ENCODE measurements at regions of chr10 and their contacts with region 1.

Region 1: GRCh38 chr10:5623081-5623748 is 43.2 kb downstream of the ASB13 start:
- DNase-seq: peak; percentile 74
- ATAC-seq: peak; percentile 86
- H3K4me3 ChIP-seq: peak overlapping the region in 2 of 3 experiments; percentile 38 to 68; a peak in 2 of 6 replicates
- H3K27ac ChIP-seq: no peak overlapping the region
- H3K4me1 ChIP-seq: peaks cover 54% of the 10 kb centered on the region
- H3K27me3 ChIP-seq: no peaks in the 10 kb centered on the region; a peak in 1 of 5 replicates
- CTCF ChIP-seq: peak; percentile 100
- EP300 ChIP-seq: no peak; a peak in 1 of 4 replicates
- POLR2A ChIP-seq: no peak
- RAD21 ChIP-seq: peak; percentile 99

Region 2: DNA sequence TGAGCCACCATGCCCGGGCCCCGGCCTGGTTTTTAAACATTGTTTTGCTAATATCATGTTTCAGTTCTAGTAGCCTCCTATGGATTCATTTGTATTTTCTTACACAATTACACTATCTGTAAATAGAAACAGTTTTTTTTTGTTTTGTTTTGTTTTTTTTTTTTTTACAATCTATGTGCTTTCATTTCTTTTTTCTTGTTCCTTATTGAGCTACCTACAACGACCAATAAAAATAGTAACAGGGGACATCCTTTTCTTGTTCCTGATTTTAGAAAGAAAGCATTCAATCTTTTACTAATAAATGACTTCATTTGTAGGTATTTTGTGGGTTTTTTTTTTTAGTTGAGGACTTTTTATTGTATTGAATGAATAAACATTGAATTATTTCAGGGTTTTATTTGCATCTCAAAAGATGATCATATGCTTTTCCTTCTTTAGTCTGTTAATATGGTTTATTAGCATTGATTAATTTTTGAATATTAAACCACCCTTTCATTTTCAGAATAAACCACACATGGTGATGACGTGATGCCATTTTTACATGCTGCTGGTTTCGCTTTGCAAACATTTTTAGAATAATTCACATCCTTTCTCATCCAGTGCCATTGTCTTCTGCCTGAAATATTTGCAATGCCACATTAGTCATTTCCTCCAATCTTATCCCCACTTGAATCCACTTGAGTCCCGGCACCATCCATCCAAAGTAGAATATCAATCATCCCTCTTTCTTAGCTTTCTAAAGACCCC is 815.3 kb before region 1 on chr10:
- CTCF ChIA-PET with region 1: no interaction called
- POLR2A ChIA-PET with region 1: no interaction called
- in situ Hi-C with region 1: loop called (anchors 25 kb)
- intact Hi-C with region 1: no loop called
- DNase-seq: peak; percentile 6
- ATAC-seq: no peak
- H3K4me3 ChIP-seq: no peak overlapping the region
- H3K27ac ChIP-seq: no peak overlapping the region
- H3K4me1 ChIP-seq: peaks cover 25% of the 10 kb centered on the region
- H3K27me3 ChIP-seq: peaks cover 0 to 6% of the 10 kb centered on the region in 2 experiments; a peak in 1 of 5 replicates
- CTCF ChIP-seq: no peak
- EP300 ChIP-seq: no peak
- POLR2A ChIP-seq: no peak
- RAD21 ChIP-seq: no peak

Region 3: DNA sequence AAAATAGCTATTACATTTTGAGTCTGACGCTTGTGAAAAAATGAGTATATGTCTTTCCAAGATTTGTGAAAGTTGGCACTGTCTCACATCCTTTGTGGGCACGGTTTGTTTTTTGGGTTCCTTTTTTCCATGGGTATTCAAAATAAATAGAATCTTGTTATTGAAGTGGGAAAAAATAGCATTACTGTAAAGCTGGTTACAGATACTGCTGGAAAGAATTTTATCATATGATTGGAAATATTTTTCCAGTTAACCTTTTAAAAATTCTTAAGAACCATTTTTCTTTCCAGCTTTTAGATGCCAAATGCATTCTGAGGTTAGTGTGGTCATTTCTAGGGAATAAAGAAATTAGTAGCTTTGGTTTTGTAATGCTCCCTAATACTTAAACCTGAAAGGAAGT is 199.4 kb before region 1 on chr10:
- CTCF ChIA-PET with region 1: no interaction called
- POLR2A ChIA-PET with region 1: no interaction called
- in situ Hi-C with region 1: no loop called
- intact Hi-C with region 1: no loop called
- DNase-seq: no peak
- ATAC-seq: no peak
- H3K4me3 ChIP-seq: no peak overlapping the region
- H3K27ac ChIP-seq: no peak overlapping the region
- H3K4me1 ChIP-seq: no peaks in the 10 kb centered on the region
- H3K27me3 ChIP-seq: no peaks in the 10 kb centered on the region
- CTCF ChIP-seq: no peak
- EP300 ChIP-seq: no peak
- POLR2A ChIP-seq: no peak
- RAD21 ChIP-seq: no peak

Region 4: GRCh38 chr10:5583525-5584175 is 39.6 kb before region 1 on chr10:
- CTCF ChIA-PET with region 1: no interaction called
- POLR2A ChIA-PET with region 1: no interaction called
- in situ Hi-C with region 1: no loop called
- intact Hi-C with region 1: loop called (anchors 5 kb)
- DNase-seq: no peak
- ATAC-seq: peak; percentile 11; the same call in 1 of the 3 replicates
- H3K4me3 ChIP-seq: peak overlapping the region in 1 of 3 experiments; percentile 20; a peak in 1 of 6 replicates
- H3K27ac ChIP-seq: no peak overlapping the region
- H3K4me1 ChIP-seq: peaks cover 84% of the 10 kb centered on the region
- H3K27me3 ChIP-seq: peaks cover 0 to 36% of the 10 kb centered on the region in 2 experiments; a peak in 3 of 5 replicates
- CTCF ChIP-seq: no peak
- EP300 ChIP-seq: no peak
- POLR2A ChIP-seq: no peak
- RAD21 ChIP-seq: no peak

Measured in HepG2 (cell line).